OCI-LY7 (cell line): ENCODE measurements at regions of chr6 and their contacts with region 1.

Region 1: DNA sequence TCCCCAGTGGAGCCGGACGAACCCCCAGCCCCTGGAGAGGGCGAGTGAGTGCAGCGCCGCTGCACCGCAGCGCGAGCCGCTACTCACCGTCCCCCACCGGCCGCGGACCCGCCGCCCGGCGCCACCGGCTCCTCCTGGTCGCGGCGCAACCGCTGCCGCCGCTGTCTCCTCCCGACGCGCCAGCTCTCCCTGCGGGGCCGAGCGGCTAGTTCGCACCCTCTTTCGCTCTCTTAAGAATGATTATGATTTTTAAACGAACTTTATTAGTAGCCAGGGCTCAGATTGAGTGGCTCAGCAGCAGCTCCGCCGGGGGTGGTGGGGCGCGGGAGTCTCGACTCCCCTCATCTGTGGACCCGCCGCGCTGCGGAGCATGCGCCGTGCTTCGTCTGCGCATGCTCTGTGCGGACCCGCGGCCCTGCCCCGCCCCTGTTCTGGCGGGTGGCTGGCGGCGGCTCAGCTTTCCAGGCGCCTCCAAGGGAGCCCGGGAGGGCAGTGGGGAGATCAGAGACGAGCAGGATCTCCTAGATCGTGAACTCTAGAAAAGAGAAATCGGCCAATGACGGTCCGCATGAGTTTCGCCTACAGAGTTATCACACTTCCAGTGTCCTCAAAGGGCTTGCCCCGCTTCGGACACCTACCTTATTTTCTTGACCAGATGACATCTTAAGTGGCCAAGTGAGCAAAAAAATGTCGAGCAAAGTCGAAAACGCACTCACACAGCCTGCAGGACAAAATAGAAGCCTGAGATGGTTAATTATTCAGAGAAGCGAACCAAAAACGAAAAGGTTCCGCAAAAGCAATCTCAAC is at the start of gene RAB23:
- DNase-seq: peak; percentile 85
- H3K4me3 ChIP-seq: peak within 1 kb of the TSS; percentile 87
- H3K27ac ChIP-seq: peak within 1 kb of the TSS; percentile 53
- H3K4me1 ChIP-seq: peaks cover 15% of the 10 kb centered on the region
- CTCF ChIP-seq: 0 out of 2 replicates have a peak, but pooled peaks have one; percentile 6
- total RNA-seq, gene RAB23: 3.5 and 4.9 TPM in 2 replicates

Region 2: GRCh38 chr6:57048577-57048976 is 173.6 kb before region 1 on chr6:
- CTCF ChIA-PET with region 1: no interaction called
- POLR2A ChIA-PET with region 1: no interaction called
- intact Hi-C with region 1: loop called (anchors 1 kb)
- DNase-seq: no peak
- H3K4me3 ChIP-seq: peak overlapping the region; percentile 64
- H3K27ac ChIP-seq: no peak overlapping the region
- H3K4me1 ChIP-seq: peaks cover 24% of the 10 kb centered on the region
- CTCF ChIP-seq: no peak